Prostate gland (tissue), 2 donors: ENCODE measurements at regions of chr5 and their contacts with region 1.

Region 1: GRCh38 chr5:107673368-107674136 is 2.8 kb upstream of the EFNA5 start:
- DNase-seq: peak; percentile 85
- H3K4me3 ChIP-seq: peak overlapping the region; percentile 46 to 50
- H3K27ac ChIP-seq: peak overlapping the region; percentile 56 to 74
- H3K4me1 ChIP-seq: no peaks in the 10 kb centered on the region
- H3K27me3 ChIP-seq: no peaks in the 10 kb centered on the region
- CTCF ChIP-seq: peak; percentile 46 to 94 (median 88)
- POLR2A ChIP-seq: no peak

Region 2: DNA sequence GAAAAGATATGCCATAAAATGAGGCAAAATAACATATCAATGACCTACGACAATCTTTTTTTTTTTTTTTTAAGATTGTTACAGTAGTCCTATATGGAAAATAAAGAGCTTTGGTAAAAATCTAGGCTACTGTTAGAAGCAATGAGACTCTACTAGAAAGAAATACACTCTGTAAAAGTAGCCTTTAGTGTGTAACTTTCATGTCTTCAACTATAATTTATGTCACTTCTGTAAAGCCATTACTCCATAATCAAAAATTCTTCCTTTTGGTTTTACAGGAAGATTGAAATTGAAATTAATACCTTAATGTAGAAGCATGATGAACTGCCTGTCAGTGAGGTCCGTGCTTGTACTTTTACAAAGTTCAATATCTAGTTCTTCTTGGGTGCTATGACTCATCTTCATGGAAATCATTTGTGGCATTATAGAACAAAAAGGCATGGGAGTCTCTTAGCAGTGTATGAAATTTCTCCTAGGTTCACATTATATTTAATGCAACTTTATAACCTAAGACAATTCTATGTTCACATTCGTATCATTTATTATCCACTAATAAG is 1395.9 kb before region 1 on chr5:
- intact Hi-C with region 1: loop called (anchors 10 kb)
- DNase-seq: no peak
- H3K4me3 ChIP-seq: no peak overlapping the region
- H3K27ac ChIP-seq: no peak overlapping the region
- H3K4me1 ChIP-seq: no peaks in the 10 kb centered on the region
- H3K27me3 ChIP-seq: no peaks in the 10 kb centered on the region
- CTCF ChIP-seq: no peak
- POLR2A ChIP-seq: no peak

Region 3: GRCh38 chr5:107067395-107067794 is 606.2 kb before region 1 on chr5:
- intact Hi-C with region 1: loop called (anchors 10 kb)
- DNase-seq: no peak
- H3K4me3 ChIP-seq: no peak overlapping the region
- H3K27ac ChIP-seq: no peak overlapping the region
- H3K4me1 ChIP-seq: no peaks in the 10 kb centered on the region
- H3K27me3 ChIP-seq: no peaks in the 10 kb centered on the region
- CTCF ChIP-seq: no peak
- POLR2A ChIP-seq: no peak

Region 4: GRCh38 chr5:107104040-107104995 is 569.2 kb before region 1 on chr5:
- intact Hi-C with region 1: loop called (anchors 10 kb)
- DNase-seq: no peak
- H3K4me3 ChIP-seq: no peak overlapping the region
- H3K27ac ChIP-seq: no peak overlapping the region
- H3K4me1 ChIP-seq: no peaks in the 10 kb centered on the region
- H3K27me3 ChIP-seq: no peaks in the 10 kb centered on the region
- CTCF ChIP-seq: no peak
- POLR2A ChIP-seq: no peak

Region 5: GRCh38 chr5:107425541-107426256 is 247.9 kb before region 1 on chr5:
- intact Hi-C with region 1: loop called (anchors 10 kb)
- DNase-seq: peak; percentile 45
- H3K4me3 ChIP-seq: no peak overlapping the region
- H3K27ac ChIP-seq: no peak overlapping the region
- H3K4me1 ChIP-seq: no peaks in the 10 kb centered on the region
- H3K27me3 ChIP-seq: no peaks in the 10 kb centered on the region
- CTCF ChIP-seq: no peak
- POLR2A ChIP-seq: no peak

Region 6: GRCh38 chr5:107571621-107572536 is 101.7 kb before region 1 on chr5:
- intact Hi-C with region 1: loop called (anchors 10 kb)
- DNase-seq: peak; percentile 97
- H3K4me3 ChIP-seq: peak overlapping the region; percentile 28 to 34
- H3K27ac ChIP-seq: peak overlapping the region; percentile 69 to 70
- H3K4me1 ChIP-seq: no peaks in the 10 kb centered on the region
- H3K27me3 ChIP-seq: no peaks in the 10 kb centered on the region
- CTCF ChIP-seq: peak; percentile 89 to 97 (median 92)
- POLR2A ChIP-seq: peak; percentile 20

Region 7: GRCh38 chr5:107713228-107713627 is 39.7 kb after region 1 on chr5:
- intact Hi-C with region 1: no loop called
- DNase-seq: no peak
- H3K4me3 ChIP-seq: no peak overlapping the region
- H3K27ac ChIP-seq: no peak overlapping the region
- H3K4me1 ChIP-seq: no peaks in the 10 kb centered on the region
- H3K27me3 ChIP-seq: no peaks in the 10 kb centered on the region
- CTCF ChIP-seq: no peak
- POLR2A ChIP-seq: no peak